HCT116 (cell line): ENCODE measurements at regions of chr2 and their contacts with region 1.

Region 1: DNA sequence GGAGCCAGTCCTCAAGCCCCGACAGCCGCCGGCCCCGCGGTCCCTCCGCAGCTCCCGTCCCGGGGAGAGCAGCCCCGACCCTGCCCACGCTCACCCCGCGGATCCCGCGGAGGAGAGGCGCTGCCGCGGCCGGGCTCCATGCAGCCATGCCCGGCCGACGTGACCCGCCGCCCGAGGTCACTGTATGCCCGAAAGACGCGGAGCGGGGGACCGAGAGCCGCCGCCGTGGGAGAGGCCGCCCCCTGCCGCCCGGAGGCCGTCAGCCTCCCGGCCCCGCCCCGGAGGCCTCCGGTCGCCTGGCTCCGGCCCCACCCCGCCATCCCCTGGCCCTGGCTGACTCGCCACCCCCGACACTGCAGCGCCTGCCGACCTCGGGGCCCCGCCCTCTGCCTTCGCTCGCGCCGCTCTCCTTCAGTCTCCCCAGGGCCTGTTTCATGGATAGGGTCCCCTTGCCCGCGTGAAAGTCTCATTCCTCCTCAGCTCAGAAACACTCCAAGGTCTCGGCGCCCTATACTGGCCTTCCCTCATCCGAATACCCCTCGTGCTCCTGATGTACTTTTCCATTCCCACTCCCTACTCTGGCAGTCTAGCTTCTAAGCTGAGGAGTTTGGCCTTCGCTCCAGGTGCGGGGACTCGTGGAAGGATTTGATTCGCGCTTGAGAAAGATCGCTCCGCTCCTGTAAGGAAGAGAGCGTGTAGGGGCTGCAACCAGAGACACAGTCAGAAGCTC is at the start of gene BOLA3:
- DNase-seq: peak; percentile 39
- ATAC-seq: peak; percentile 94
- H3K4me3 ChIP-seq: peak within 1 kb of the TSS; percentile 62 to 79
- H3K27ac ChIP-seq: peak within 1 kb of the TSS; percentile 69
- H3K4me1 ChIP-seq: peaks cover 5 to 17% of the 10 kb centered on the region in 2 experiments; a peak in 3 of 4 replicates
- H3K27me3 ChIP-seq: no peaks in the 10 kb centered on the region
- CTCF ChIP-seq: peak; percentile 51 to 66 (median 63); a peak in 5 of 6 replicates
- POLR2A ChIP-seq: peak; percentile 78
- RAD21 ChIP-seq: peak; percentile 59
- total RNA-seq, gene BOLA3: 62.9 TPM

Region 2: GRCh38 chr2:73638429-73638828 is 509.5 kb before region 1 on chr2:
- CTCF ChIA-PET with region 1: no interaction called
- POLR2A ChIA-PET with region 1: no interaction called
- RAD21 ChIA-PET with region 1: no interaction called
- intact Hi-C with region 1: loop called (anchors 5 kb)
- DNase-seq: no peak
- ATAC-seq: no peak
- H3K4me3 ChIP-seq: no peak overlapping the region
- H3K27ac ChIP-seq: no peak overlapping the region
- H3K4me1 ChIP-seq: peaks cover 0 to 3% of the 10 kb centered on the region in 2 experiments; a peak in 1 of 4 replicates
- H3K27me3 ChIP-seq: no peaks in the 10 kb centered on the region
- CTCF ChIP-seq: no peak
- POLR2A ChIP-seq: no peak
- RAD21 ChIP-seq: no peak

Region 3: GRCh38 chr2:73685770-73686438 is 462.0 kb before region 1 on chr2:
- CTCF ChIA-PET with region 1: no interaction called
- POLR2A ChIA-PET with region 1: no interaction called
- RAD21 ChIA-PET with region 1: no interaction called
- intact Hi-C with region 1: loop called (anchors 5 kb)
- DNase-seq: no peak
- ATAC-seq: no peak
- H3K4me3 ChIP-seq: no peak overlapping the region
- H3K27ac ChIP-seq: no peak overlapping the region
- H3K4me1 ChIP-seq: no peaks in the 10 kb centered on the region
- H3K27me3 ChIP-seq: no peaks in the 10 kb centered on the region
- CTCF ChIP-seq: no peak
- POLR2A ChIP-seq: no peak
- RAD21 ChIP-seq: no peak

Region 4: GRCh38 chr2:73828818-73829570 is 318.9 kb before region 1 on chr2 and contains the start of gene STAMBP:
- CTCF ChIA-PET with region 1: interaction called, 39 read pairs
- POLR2A ChIA-PET with region 1: interaction called, 6 read pairs
- RAD21 ChIA-PET with region 1: interaction called, 4 to 6 read pairs
- intact Hi-C with region 1: loop called (anchors 1 kb)
- DNase-seq: peak; percentile 95
- ATAC-seq: peak; percentile 92
- H3K4me3 ChIP-seq: peak within 1 kb of the TSS; percentile 73 to 95
- H3K27ac ChIP-seq: peak within 1 kb of the TSS; percentile 79
- H3K4me1 ChIP-seq: peaks cover 11 to 32% of the 10 kb centered on the region in 2 experiments; a peak in 3 of 4 replicates
- H3K27me3 ChIP-seq: no peaks in the 10 kb centered on the region
- CTCF ChIP-seq: no peak
- POLR2A ChIP-seq: no peak
- RAD21 ChIP-seq: no peak
- total RNA-seq, gene STAMBP: 45.2 TPM

Region 5: GRCh38 chr2:73836141-73836949 is 311.5 kb before region 1 on chr2:
- CTCF ChIA-PET with region 1: no interaction called
- POLR2A ChIA-PET with region 1: no interaction called
- RAD21 ChIA-PET with region 1: no interaction called
- intact Hi-C with region 1: loop called (anchors 5 kb)
- DNase-seq: no peak
- ATAC-seq: no peak
- H3K4me3 ChIP-seq: no peak overlapping the region
- H3K27ac ChIP-seq: no peak overlapping the region
- H3K4me1 ChIP-seq: peaks cover 0 to 6% of the 10 kb centered on the region in 2 experiments; a peak in 2 of 4 replicates
- H3K27me3 ChIP-seq: no peaks in the 10 kb centered on the region
- CTCF ChIP-seq: no peak
- POLR2A ChIP-seq: no peak
- RAD21 ChIP-seq: no peak